ENCODE measurements at regions of chr15 and their contacts with region 1.

Region 1: GRCh38 chr15:74240002-74240568 is 4.0 kb downstream of the CCDC33 start:
- DNase-seq: peak; percentile 72 to 93
- ATAC-seq: peak; percentile 90 to 97
- H3K4me3 ChIP-seq: no peak overlapping the region
- H3K27ac ChIP-seq: peak overlapping the region; percentile 79 to 85
- H3K4me1 ChIP-seq: peaks cover 51% of the 10 kb centered on the region
- CTCF ChIP-seq: peak; percentile 38; the same call in 2 of the 3 replicates
- EP300 ChIP-seq: no peak; a peak in 1 of 5 replicates
- POLR2A ChIP-seq: no peak
- RAD21 ChIP-seq: peak; percentile 21 to 49; a peak in 4 of 5 replicates

Region 2: GRCh38 chr15:74108111-74108510 is 132.0 kb before region 1 on chr15:
- CTCF ChIA-PET with region 1: no interaction called
- POLR2A ChIA-PET with region 1: no interaction called
- DNase-seq: no peak
- ATAC-seq: no peak
- H3K4me3 ChIP-seq: no peak overlapping the region
- H3K27ac ChIP-seq: no peak overlapping the region
- H3K4me1 ChIP-seq: no peaks in the 10 kb centered on the region
- CTCF ChIP-seq: no peak
- EP300 ChIP-seq: no peak
- POLR2A ChIP-seq: no peak
- RAD21 ChIP-seq: no peak

Region 3: GRCh38 chr15:74213858-74214284 is 26.2 kb before region 1 on chr15:
- CTCF ChIA-PET with region 1: no interaction called
- POLR2A ChIA-PET with region 1: no interaction called
- DNase-seq: no peak
- ATAC-seq: no peak
- H3K4me3 ChIP-seq: no peak overlapping the region
- H3K27ac ChIP-seq: peak overlapping the region; percentile 81 to 87
- H3K4me1 ChIP-seq: peaks cover 50% of the 10 kb centered on the region
- CTCF ChIP-seq: no peak
- EP300 ChIP-seq: no peak
- POLR2A ChIP-seq: no peak
- RAD21 ChIP-seq: no peak

Region 4: DNA sequence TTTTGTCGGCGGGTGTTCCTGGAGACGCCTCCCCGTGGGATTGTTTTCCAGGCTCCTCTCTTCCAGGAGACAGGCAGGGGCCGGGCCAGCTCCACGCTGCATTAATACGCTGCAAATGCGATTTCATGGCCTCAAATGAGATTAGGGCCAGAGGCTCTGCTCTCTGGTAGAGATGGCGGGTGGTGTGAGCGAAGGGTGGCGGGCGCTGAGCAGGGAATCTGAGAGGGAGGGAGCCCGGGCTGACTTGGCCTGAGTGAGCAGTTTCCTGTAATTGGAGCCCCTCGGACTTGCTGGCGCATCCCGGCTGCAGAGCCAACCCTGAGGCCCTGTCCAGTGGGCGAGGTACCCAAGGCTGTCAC is 11.4 kb before region 1 on chr15:
- CTCF ChIA-PET with region 1: interaction called, 12 read pairs
- POLR2A ChIA-PET with region 1: no interaction called
- DNase-seq: no peak
- ATAC-seq: no peak
- H3K4me3 ChIP-seq: no peak overlapping the region
- H3K27ac ChIP-seq: no peak overlapping the region
- H3K4me1 ChIP-seq: peaks cover 20% of the 10 kb centered on the region
- CTCF ChIP-seq: no peak
- EP300 ChIP-seq: no peak
- POLR2A ChIP-seq: no peak
- RAD21 ChIP-seq: no peak

Region 5: GRCh38 chr15:74695597-74696397 is 455.7 kb after region 1 on chr15 and contains the start of gene EDC3:
- CTCF ChIA-PET with region 1: no interaction called
- POLR2A ChIA-PET with region 1: no interaction called
- DNase-seq: peak; percentile 69 to 79
- ATAC-seq: peak; percentile 96 to 97
- H3K4me3 ChIP-seq: peak within 1 kb of the TSS; percentile 71
- H3K27ac ChIP-seq: peak within 1 kb of the TSS; percentile 88 to 90
- H3K4me1 ChIP-seq: peaks cover 15% of the 10 kb centered on the region; the same call in 1 of the 3 replicates
- CTCF ChIP-seq: no peak
- EP300 ChIP-seq: no peak
- POLR2A ChIP-seq: peak; percentile 27; the same call in 1 of the 2 replicates
- RAD21 ChIP-seq: no peak
- polyA plus RNA-seq, gene EDC3: 23.2 and 31.2 TPM in 2 replicates

Measured in A549 (cell line).